ENCODE measurements at regions of chr5 and their contacts with region 1.

Region 1: DNA sequence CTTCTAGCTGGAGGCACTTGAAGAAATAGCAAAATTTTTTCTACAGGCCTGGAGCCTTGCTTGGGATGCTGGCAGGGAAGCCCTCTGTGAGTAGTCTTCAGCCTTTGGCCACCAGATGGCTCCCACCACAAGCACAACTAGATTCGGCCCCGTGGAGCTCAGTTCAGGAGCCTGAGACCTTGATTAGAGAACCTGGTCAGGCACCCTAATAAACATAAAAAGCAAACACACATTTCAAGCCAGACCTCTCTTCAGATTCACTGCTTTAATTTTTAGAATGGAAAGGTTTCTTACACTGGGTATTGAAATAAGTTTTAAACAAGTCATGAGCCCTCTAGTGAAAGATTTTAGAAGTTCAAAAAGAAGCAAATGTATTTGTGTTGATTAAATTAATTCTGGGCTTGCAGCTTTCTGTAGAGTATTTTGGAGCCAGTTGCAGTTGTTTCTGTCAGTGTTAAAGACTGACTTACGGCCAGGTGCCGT is 41.4 kb downstream of the GLRX start:
- DNase-seq: peak; percentile 83 to 86 (median 84)
- H3K4me3 ChIP-seq: peak overlapping the region in 3 of 7 experiments; percentile 2 to 52 (median 49)
- H3K27ac ChIP-seq: no peak overlapping the region
- H3K4me1 ChIP-seq: peaks cover 11 to 29% (median 25%) of the 10 kb centered on the region in 4 experiments
- H3K27me3 ChIP-seq: no peaks in the 10 kb centered on the region

Region 2: GRCh38 chr5:94884311-94884710 is 896.8 kb before region 1 on chr5:
- CTCF ChIA-PET with region 1: no interaction called
- POLR2A ChIA-PET with region 1: no interaction called
- DNase-seq: no peak
- H3K4me3 ChIP-seq: no peak overlapping the region
- H3K27ac ChIP-seq: no peak overlapping the region
- H3K4me1 ChIP-seq: no peaks in the 10 kb centered on the region
- H3K27me3 ChIP-seq: no peaks in the 10 kb centered on the region

Region 3: DNA sequence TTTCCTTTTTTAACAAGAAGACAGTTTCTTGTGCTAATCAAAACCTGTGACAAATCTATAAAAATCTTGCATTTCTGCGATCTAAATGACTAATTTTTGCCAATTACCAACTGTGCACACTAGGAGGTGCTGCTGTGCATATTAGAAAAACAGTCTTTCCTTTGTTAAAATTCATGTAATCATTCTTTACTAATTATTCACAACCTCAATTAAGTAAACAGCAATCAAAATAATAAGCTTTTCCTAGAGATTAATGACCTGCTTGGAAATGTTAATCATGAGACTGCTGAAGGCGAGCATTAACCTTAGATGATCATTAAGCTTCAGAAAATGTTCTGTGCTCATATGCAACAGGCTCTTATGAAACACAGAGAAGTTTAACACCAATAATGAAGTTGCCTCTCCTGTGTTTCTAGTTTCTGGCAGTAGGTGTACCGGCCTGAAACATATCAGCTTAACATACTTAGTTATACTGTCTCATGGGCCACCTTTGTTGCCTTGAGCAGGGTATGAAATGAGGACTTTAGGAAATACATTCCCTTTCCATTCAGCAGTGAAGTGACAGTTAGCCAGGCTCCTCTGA is 116.8 kb before region 1 on chr5:
- CTCF ChIA-PET with region 1: interaction called, 15 read pairs
- POLR2A ChIA-PET with region 1: no interaction called
- DNase-seq: peak; percentile 38 to 68 (median 52)
- H3K4me3 ChIP-seq: no peak overlapping the region
- H3K27ac ChIP-seq: no peak overlapping the region
- H3K4me1 ChIP-seq: peaks cover 0 to 25% (median 14%) of the 10 kb centered on the region in 4 experiments
- H3K27me3 ChIP-seq: no peaks in the 10 kb centered on the region

Region 4: DNA sequence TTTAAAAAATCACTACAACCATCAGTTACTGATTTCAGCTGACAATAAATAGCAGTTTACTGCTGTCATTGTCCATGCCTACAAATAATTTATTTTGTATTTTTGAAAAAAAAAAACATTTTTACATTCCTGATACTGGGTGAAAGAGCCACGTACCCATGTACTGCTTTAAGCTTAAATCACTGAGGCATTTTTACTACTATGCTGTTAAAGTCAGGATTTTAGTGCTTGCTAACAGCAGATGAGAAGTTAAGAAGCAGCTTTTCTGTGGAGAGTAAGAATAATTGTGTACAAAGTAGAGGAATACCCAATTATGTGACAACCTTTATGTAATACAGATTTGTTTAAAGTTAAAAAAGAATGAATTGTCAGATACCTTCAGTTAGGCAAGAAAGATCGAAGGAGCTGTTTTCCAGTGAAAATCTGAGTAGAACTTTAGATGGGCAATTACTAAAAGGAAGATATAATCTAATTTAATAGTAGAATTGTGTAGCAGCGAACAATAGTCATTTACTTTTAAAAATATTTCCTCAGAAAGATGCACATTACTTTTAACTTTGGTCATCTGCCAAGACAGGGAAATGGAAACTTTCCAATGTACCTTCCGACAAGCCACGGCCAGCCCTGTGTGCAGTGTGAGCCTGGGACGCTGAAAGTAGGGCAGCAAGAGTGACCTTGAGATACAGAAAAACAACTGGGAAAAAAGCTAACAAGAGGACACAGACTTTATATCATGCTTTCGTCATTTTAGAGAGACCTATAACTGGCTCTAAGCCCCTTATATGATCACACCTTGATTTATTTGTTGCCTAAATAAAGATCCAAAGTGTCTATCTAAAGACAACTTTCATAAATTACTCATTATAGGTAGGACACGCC is 10.1 kb before region 1 on chr5:
- CTCF ChIA-PET with region 1: interaction called, 11 read pairs
- POLR2A ChIA-PET with region 1: interaction called, 3 read pairs
- DNase-seq: no peak
- H3K4me3 ChIP-seq: no peak overlapping the region
- H3K27ac ChIP-seq: no peak overlapping the region
- H3K4me1 ChIP-seq: peaks cover 7 to 21% (median 14%) of the 10 kb centered on the region in 4 experiments
- H3K27me3 ChIP-seq: no peaks in the 10 kb centered on the region

Region 5: GRCh38 chr5:95808686-95809413 is 27.7 kb after region 1 on chr5:
- CTCF ChIA-PET with region 1: interaction called, 53 read pairs
- POLR2A ChIA-PET with region 1: no interaction called
- DNase-seq: peak; percentile 86 to 97 (median 96)
- H3K4me3 ChIP-seq: peak overlapping the region in 5 of 7 experiments; percentile 11 to 55 (median 26)
- H3K27ac ChIP-seq: peak overlapping the region; percentile 7 to 57
- H3K4me1 ChIP-seq: peaks cover 24 to 46% (median 36%) of the 10 kb centered on the region in 4 experiments
- H3K27me3 ChIP-seq: no peaks in the 10 kb centered on the region

Region 6: DNA sequence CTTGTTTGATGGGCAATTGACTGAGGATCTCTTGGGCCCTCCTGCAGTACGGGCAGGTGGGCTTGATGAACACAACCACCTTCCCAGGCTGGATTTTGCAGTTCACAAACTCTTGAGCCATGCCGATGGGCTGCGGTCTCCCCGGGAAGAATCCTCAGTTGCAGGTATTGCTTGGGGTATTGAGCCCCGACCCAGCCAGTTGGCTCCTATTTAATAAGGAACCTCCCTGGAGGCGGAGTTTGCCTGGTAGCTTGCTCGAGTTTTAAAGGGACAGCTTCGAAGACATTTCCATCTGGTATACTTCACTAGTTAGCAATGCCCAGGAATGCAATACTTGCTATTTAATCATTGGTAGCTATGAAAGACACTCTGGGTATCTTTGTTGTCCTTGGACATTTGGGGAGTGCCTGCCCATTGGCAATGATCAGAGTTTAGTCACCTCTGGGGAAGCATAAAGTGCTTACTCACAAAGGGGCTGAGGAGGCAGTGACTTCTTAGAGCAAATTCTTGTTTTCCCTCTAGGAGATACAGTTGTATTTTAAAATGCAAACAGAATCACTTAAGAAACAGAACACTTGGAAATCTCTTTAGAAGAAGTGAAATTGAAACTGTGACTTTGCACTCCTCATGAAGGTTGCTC is 41.5 kb after region 1 on chr5 and contains the start of gene GLRX:
- CTCF ChIA-PET with region 1: interaction called, 33 read pairs
- POLR2A ChIA-PET with region 1: no interaction called
- DNase-seq: peak in 2 of 3 donors; percentile 67 to 77
- H3K4me3 ChIP-seq: peak within 1 kb of the TSS; percentile 58 to 97 (median 91)
- H3K27ac ChIP-seq: peak within 1 kb of the TSS; percentile 70 to 86
- H3K4me1 ChIP-seq: peaks cover 28 to 83% (median 60%) of the 10 kb centered on the region in 4 experiments
- H3K27me3 ChIP-seq: no peaks in the 10 kb centered on the region

Region 7: DNA sequence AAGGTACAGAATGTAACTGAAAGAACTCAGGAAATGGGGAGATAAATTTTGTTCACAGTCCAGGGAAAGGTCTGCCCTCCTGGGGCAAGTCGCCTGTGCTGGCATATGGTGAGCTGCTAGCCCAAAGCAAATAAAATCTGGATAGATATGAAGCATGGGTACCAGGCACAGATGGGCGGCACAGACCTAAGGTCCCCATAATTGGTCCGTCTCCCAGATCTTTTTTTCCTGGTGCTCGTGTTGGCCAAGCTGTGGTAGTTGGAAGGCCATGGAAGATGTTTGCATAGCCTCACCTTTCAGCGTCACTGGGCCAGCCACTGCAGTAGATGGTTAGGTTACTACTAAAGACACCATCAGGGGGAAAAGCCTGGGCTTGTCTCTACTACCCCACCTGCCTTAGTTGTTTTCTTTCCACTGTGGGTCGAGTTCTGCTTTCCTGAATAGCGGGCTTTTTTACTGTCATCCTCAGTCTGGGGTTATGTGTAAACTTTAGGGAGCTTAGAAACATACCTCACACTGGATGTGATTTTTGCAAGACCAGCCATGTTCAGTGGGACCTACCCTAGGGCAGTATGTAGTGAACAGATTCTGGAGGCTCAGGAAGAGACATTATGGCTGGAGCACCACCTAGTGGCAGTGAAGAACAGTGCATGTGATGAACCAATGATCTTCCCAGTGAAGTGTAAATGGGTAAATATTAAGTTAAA is 65.6 kb after region 1 on chr5:
- CTCF ChIA-PET with region 1: interaction called, 430 read pairs
- POLR2A ChIA-PET with region 1: interaction called, 3 read pairs
- DNase-seq: peak; percentile 71 to 85 (median 77)
- H3K4me3 ChIP-seq: no peak overlapping the region
- H3K27ac ChIP-seq: no peak overlapping the region
- H3K4me1 ChIP-seq: peaks cover 13 to 31% (median 26%) of the 10 kb centered on the region in 4 experiments
- H3K27me3 ChIP-seq: no peaks in the 10 kb centered on the region

Measured in common myeloid progenitor, CD34-positive (primary cell).